ENCODE measurements at regions of chr2 and their contacts with region 1.

Region 1: GRCh38 chr2:162153608-162154224 is 1.7 kb upstream of the GCG start:
- DNase-seq: peak; percentile 79
- ATAC-seq: peak; percentile 96
- H3K4me3 Mint-ChIP-seq: no peak overlapping the region
- H3K27ac Mint-ChIP-seq: no peak overlapping the region
- H3K4me1 Mint-ChIP-seq: no peaks in the 10 kb centered on the region
- H3K27me3 Mint-ChIP-seq: peaks cover 19% of the 10 kb centered on the region
- CTCF ChIP-seq: peak; percentile 76

Region 2: GRCh38 chr2:161975062-161975812 is 178.5 kb before region 1 on chr2:
- CTCF ChIA-PET with region 1: no interaction called
- POLR2A ChIA-PET with region 1: no interaction called
- intact Hi-C with region 1: no loop called
- DNase-seq: no peak
- ATAC-seq: no peak
- H3K4me3 Mint-ChIP-seq: no peak overlapping the region
- H3K27ac Mint-ChIP-seq: peak overlapping the region; percentile 75
- H3K4me1 Mint-ChIP-seq: peaks cover 54% of the 10 kb centered on the region
- H3K27me3 Mint-ChIP-seq: no peaks in the 10 kb centered on the region
- CTCF ChIP-seq: no peak

Region 3: DNA sequence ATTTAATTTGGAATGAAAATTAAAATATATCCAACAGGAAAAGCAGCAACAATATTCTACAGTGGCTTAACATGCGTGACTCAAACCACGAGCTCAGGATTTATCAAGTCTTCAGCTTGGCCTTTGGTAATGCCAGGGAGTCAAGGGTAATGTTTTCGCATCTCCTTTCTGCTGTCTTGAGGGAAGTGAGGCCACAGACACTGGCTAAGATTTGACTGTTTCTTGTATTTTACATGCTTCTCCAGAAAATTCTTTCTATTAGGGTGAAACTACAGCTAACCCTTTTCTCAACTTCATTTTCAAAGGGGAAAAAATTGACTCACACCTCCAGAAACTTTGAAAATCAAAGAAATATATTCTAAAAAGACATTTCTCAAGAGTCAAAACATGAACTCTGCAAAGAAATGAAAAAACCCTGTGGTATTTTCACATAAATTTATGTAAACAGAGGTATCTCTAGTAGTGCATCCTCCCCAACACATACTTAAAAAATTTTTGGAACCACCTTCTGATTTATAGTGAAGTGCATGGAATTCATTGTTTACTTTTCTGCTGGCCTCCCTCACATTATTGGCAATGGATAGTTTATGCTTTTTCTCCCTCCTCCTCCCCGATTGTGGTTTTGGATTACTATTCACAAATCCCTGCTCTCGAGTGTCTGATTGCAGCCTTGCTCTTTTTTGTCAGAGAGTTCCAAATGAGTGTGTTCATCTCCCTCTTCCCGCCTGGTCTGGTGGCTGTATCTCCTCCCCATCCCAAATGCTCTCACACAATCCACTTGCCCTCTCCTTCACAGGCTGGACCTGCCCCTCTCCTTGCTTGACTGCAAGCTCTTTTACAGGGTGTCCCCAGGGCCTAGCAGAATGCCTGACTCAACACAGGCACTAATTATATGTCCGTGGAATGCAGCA is 128.3 kb before region 1 on chr2:
- CTCF ChIA-PET with region 1: no interaction called
- POLR2A ChIA-PET with region 1: no interaction called
- intact Hi-C with region 1: no loop called
- DNase-seq: no peak
- ATAC-seq: peak; percentile 24
- H3K4me3 Mint-ChIP-seq: no peak overlapping the region
- H3K27ac Mint-ChIP-seq: no peak overlapping the region
- H3K4me1 Mint-ChIP-seq: peaks cover 56% of the 10 kb centered on the region
- H3K27me3 Mint-ChIP-seq: no peaks in the 10 kb centered on the region
- CTCF ChIP-seq: no peak

Region 4: DNA sequence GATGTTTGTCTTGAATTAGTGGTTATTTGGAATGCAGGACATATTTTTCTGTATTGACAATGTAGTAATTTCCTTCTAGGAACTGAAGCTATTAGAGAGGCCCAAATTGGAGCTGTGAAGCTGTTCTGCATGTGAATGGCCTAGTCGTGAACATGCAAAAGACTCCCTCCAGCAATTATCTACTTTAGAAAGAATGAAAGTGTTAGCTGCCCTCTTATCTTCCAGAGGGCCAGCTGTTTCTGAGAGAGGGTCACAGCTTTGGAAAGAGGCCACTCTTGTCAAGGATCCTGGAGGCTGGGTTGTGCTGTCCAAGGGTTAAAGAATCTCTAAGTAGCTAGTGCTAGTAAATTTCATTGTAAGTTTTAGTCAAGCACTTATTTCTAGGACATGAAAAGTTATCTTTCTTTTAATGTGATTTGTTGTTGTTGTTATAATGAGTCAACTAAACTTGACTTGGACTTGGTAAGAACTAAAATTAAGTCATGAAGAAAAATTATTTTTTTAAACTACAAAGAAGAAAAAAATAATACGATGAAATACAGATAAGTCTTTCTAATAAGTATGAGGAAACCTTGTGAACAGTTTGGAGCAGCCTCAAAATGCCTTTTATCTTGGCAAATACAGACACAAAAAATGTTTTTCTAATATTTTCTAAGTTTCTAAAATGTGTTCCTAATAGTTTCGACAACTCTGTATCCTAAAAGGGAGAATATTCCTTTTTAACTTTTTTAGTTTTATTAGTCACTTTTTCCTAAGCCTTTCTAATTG is 116.5 kb before region 1 on chr2:
- CTCF ChIA-PET with region 1: no interaction called
- POLR2A ChIA-PET with region 1: no interaction called
- intact Hi-C with region 1: no loop called
- DNase-seq: no peak
- ATAC-seq: no peak
- H3K4me3 Mint-ChIP-seq: no peak overlapping the region
- H3K27ac Mint-ChIP-seq: no peak overlapping the region
- H3K4me1 Mint-ChIP-seq: no peaks in the 10 kb centered on the region
- H3K27me3 Mint-ChIP-seq: no peaks in the 10 kb centered on the region
- CTCF ChIP-seq: no peak

Region 5: DNA sequence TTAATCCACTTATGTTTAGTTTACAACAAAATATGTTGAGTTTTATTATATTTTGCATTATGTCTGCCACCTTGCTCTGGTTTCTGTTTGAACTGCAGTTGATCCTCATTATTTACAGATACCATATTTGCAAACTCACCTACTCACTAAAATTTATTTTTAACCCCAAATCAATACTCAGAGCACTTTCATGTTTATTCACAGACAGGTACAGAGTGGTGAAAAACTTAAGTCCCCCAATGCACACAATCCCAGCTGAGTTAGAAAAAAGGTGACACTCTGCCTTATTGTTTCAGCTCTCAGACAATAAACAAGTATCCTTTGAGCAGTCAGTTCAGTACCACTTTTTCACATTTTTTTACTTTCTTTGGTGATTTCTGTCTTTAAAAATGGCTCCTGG is 15.4 kb before region 1 on chr2:
- CTCF ChIA-PET with region 1: interaction called, 19 read pairs
- POLR2A ChIA-PET with region 1: no interaction called
- intact Hi-C with region 1: no loop called
- DNase-seq: no peak
- ATAC-seq: no peak
- H3K4me3 Mint-ChIP-seq: no peak overlapping the region
- H3K27ac Mint-ChIP-seq: no peak overlapping the region
- H3K4me1 Mint-ChIP-seq: no peaks in the 10 kb centered on the region
- H3K27me3 Mint-ChIP-seq: peaks cover 12% of the 10 kb centered on the region
- CTCF ChIP-seq: no peak

Region 6: DNA sequence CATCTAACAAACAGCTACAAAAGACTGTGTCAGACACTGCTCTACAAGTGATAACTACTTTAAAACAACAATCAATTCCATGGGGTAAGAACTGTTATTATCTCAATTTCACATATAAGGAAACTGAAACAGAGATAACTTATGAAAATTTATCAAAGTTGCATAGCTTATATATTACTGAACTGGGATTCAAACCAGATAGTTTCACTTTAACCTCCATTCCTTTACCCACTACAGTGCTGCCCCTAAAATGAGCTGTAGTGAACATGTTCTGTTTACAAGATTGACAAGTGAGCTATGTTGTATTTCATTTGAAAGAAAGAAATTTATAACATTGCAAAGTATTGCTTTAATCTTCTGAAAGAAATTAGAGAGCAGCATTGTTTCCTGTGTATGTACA is 12.5 kb after region 1 on chr2:
- CTCF ChIA-PET with region 1: interaction called, 48 read pairs
- POLR2A ChIA-PET with region 1: no interaction called
- intact Hi-C with region 1: no loop called
- DNase-seq: no peak
- ATAC-seq: no peak
- H3K4me3 Mint-ChIP-seq: no peak overlapping the region
- H3K27ac Mint-ChIP-seq: no peak overlapping the region
- H3K4me1 Mint-ChIP-seq: peaks cover 2% of the 10 kb centered on the region
- H3K27me3 Mint-ChIP-seq: peaks cover 22% of the 10 kb centered on the region
- CTCF ChIP-seq: no peak